Transverse colon (tissue), 4 donors: ENCODE measurements at regions of chr2 and their contacts with region 1.

Region 1: GRCh38 chr2:43484323-43484930 is 111.4 kb downstream of the THADA start:
- DNase-seq: no peak
- H3K4me3 ChIP-seq: no peak overlapping the region
- H3K27ac ChIP-seq: peak overlapping the region; percentile 66 to 79 (median 70)
- H3K4me1 ChIP-seq: peaks cover 8 to 40% (median 10%) of the 10 kb centered on the region in 4 donors
- H3K27me3 ChIP-seq: no peaks in the 10 kb centered on the region
- CTCF ChIP-seq: peak; percentile 62 to 87 (median 65)
- EP300 ChIP-seq: no peak
- POLR2A ChIP-seq: no peak

Region 2: GRCh38 chr2:42828487-42829425 is 655.7 kb before region 1 on chr2:
- in situ Hi-C with region 1: loop called in 3 of 4 experiments (anchors 10 to 25 kb)
- intact Hi-C with region 1: loop called (anchors 5 kb)
- DNase-seq: peak; percentile 75
- H3K4me3 ChIP-seq: no peak overlapping the region
- H3K27ac ChIP-seq: peak overlapping the region in 3 of 4 donors; percentile 20 to 40 (median 34)
- H3K4me1 ChIP-seq: peaks cover 9 to 22% (median 17%) of the 10 kb centered on the region in 4 donors
- H3K27me3 ChIP-seq: no peaks in the 10 kb centered on the region
- CTCF ChIP-seq: peak; percentile 90 to 95 (median 92)
- EP300 ChIP-seq: no peak
- POLR2A ChIP-seq: no peak

Region 3: GRCh38 chr2:42944779-42945415 is 539.5 kb before region 1 on chr2:
- in situ Hi-C with region 1: loop called in 3 of 4 experiments (anchors 10 to 25 kb)
- intact Hi-C with region 1: loop called (anchors 10 kb)
- DNase-seq: no peak
- H3K4me3 ChIP-seq: no peak overlapping the region
- H3K27ac ChIP-seq: no peak overlapping the region
- H3K4me1 ChIP-seq: peaks cover 0 to 10% (median 9%) of the 10 kb centered on the region in 4 donors
- H3K27me3 ChIP-seq: no peaks in the 10 kb centered on the region
- CTCF ChIP-seq: no peak
- EP300 ChIP-seq: no peak
- POLR2A ChIP-seq: no peak

Region 4: GRCh38 chr2:42974721-42975717 is 509.4 kb before region 1 on chr2:
- in situ Hi-C with region 1: loop called in 2 of 4 experiments (anchors 10 to 25 kb)
- intact Hi-C with region 1: loop called (anchors 10 kb)
- DNase-seq: peak; percentile 79
- H3K4me3 ChIP-seq: peak overlapping the region in 3 of 4 donors; percentile 16 to 46 (median 31)
- H3K27ac ChIP-seq: peak overlapping the region; percentile 58 to 81 (median 70)
- H3K4me1 ChIP-seq: peaks cover 14 to 42% (median 32%) of the 10 kb centered on the region in 4 donors
- H3K27me3 ChIP-seq: no peaks in the 10 kb centered on the region
- CTCF ChIP-seq: peak; percentile 93 to 97 (median 95)
- EP300 ChIP-seq: no peak
- POLR2A ChIP-seq: no peak

Region 5: DNA sequence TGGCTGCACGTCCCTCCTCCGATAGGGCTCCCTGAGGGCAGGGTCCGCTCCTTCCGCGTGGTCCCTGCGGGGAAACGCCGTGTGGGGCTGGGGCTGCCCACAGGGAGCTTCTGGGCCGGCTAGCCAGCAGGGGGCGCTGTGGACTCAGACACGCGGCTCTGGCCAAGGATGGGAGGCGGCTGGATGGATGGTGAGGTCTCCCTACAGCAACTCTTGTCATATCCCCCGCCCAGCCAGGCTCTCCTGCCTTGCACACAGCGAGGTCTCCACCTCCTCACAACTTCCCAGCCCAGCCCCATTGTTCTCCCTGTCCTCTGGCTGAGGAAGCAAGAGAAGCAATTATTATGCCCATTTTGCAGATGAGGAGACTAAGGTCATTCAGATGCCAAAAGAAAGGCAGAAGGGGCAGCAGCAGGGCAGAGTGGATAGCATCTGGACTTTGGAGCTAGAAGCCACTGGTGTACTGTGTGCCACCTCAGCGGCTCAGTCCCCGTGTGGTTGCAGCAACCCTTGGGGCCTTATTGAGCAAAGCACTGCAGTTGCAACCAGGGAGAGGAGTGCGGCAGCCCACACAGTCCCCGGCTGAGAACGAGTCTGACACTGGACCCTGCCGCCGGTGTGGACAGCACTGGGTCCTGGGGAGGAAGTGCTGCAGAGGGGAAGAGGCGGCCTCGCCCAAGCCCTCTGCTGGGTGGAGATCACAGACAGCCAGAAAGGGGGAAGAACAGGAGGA is 357.1 kb before region 1 on chr2:
- in situ Hi-C with region 1: loop called in 3 of 4 experiments (anchors 10 to 25 kb)
- intact Hi-C with region 1: no loop called
- DNase-seq: peak; percentile 84
- H3K4me3 ChIP-seq: no peak overlapping the region
- H3K27ac ChIP-seq: peak overlapping the region; percentile 83 to 89 (median 86)
- H3K4me1 ChIP-seq: peaks cover 20 to 60% (median 34%) of the 10 kb centered on the region in 4 donors
- H3K27me3 ChIP-seq: no peaks in the 10 kb centered on the region
- CTCF ChIP-seq: peak; percentile 52 to 78 (median 59)
- EP300 ChIP-seq: no peak
- POLR2A ChIP-seq: no peak

Region 6: DNA sequence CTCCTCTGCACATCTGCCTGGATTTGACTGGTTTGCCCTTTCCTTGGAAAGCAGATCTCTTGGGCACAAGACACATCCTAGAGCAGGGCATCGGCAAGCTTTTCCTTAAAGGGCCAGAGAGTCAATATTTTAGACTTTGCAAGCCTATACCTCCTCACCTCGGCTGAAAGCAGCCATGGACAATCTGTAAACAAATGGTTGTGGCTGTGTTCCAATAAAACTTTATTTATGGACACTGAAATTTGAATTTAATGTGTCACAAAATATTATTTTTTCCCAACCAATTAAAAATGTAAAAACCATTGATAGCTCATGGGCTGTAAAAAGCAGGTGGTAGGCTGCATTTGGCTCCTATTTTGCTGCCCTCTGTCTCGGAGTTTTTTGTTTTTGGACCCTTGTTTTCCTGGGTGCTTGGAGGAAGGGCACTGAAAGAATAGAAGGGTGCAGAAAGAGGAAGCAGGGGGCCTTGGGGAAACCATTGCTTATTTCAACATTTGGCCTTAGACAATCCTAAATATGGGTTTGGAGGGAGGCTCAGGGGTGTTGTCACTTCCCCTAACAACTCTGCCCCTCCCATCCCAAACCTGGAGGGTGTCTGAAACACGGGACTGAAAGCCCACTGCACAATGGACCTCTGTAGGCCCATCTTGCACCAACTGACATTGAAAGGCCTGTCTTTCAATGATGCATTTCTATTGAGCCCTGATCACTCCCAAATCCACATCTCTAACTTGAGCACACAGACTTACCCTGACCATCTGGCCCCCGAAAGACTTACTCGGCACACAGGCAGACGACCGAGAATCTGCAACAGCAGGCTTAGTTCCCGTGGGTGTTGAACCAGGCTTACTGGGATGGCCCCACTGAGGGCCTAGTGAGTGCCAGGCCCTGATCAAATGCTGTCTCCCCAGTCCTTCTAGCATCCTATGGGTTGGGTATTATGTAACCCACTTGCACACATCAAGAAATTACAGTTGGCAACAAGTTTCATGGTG is 250.9 kb before region 1 on chr2:
- in situ Hi-C with region 1: loop called (anchors 5 to 10 kb)
- intact Hi-C with region 1: no loop called
- DNase-seq: no peak
- H3K4me3 ChIP-seq: no peak overlapping the region
- H3K27ac ChIP-seq: peak overlapping the region in 1 of 4 donors; percentile 2
- H3K4me1 ChIP-seq: peaks cover 9 to 22% (median 13%) of the 10 kb centered on the region in 4 donors
- H3K27me3 ChIP-seq: no peaks in the 10 kb centered on the region
- CTCF ChIP-seq: no peak
- EP300 ChIP-seq: no peak
- POLR2A ChIP-seq: no peak

Region 7: GRCh38 chr2:44361330-44362206 is 877.1 kb after region 1 on chr2 and contains the starts of genes CAMKMT and PREPL:
- in situ Hi-C with region 1: no loop called
- intact Hi-C with region 1: no loop called
- DNase-seq: peak; percentile 99
- H3K4me3 ChIP-seq: peak within 1 kb of the TSS; percentile 76 to 94 (median 85)
- H3K27ac ChIP-seq: peak within 1 kb of the TSS; percentile 89 to 95 (median 94)
- H3K4me1 ChIP-seq: peaks cover 10 to 33% (median 17%) of the 10 kb centered on the region in 4 donors
- H3K27me3 ChIP-seq: no peaks in the 10 kb centered on the region
- CTCF ChIP-seq: peak in 2 of 5 experiments; percentile 12 to 24
- EP300 ChIP-seq: no peak
- POLR2A ChIP-seq: peak; percentile 75
- total RNA-seq, gene CAMKMT: 4.5 to 57.9 (median 15.4) TPM
- total RNA-seq, gene PREPL: 29.2 to 55.9 (median 32.4) TPM